ENCODE measurements at regions of chr17 and their contacts with region 1.

Region 1: DNA sequence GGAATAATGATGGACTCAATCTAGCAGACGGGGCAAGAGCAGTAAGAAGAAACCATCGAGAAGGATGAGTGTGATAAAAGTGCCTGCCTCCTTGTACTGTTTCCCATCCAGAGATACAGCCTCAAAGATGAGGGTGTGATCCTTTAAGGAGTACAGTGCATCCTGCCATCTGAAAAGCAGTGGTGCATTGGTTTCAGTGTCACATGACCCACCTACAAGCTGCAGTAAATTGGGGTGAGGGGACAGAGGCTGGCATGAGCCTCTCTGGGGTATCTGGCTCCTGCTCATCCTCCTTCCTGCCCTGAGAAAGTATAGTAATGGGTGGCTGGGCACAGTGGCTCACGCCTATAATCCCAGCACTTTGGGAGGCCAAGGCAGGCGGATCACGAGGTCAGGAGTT is 1.8 kb upstream of the SKAP1 start:
- DNase-seq: no peak
- H3K4me3 ChIP-seq: no peak overlapping the region
- H3K27ac ChIP-seq: no peak overlapping the region
- H3K4me1 ChIP-seq: peaks cover 6% of the 10 kb centered on the region
- H3K27me3 ChIP-seq: peaks cover 3% of the 10 kb centered on the region
- CTCF ChIP-seq: no peak

Region 2: DNA sequence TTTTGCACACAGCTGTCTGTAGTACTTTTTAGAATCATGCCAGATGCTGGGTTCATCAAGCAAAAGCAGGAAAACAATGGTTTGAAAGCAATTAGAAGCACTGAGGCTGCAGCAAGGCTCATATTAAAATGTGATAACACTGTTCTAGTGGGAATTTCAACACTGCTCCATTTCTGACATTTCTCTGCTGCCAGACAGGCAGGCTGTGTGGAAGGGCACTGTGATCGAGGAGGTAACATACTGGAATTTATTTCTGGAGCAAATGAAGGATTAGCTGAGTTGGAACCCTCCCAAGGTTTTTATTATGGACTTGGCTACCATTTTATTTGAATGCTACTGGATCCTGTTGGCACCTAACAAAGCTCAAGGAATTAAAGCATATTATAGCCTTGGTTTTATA is 68.7 kb before region 1 on chr17:
- CTCF ChIA-PET with region 1: interaction called, 10 read pairs
- dilution Hi-C with region 1: no loop called
- in situ Hi-C with region 1: no loop called
- intact Hi-C with region 1: no loop called
- DNase-seq: no peak
- H3K4me3 ChIP-seq: no peak overlapping the region
- H3K27ac ChIP-seq: no peak overlapping the region
- H3K4me1 ChIP-seq: no peaks in the 10 kb centered on the region
- H3K27me3 ChIP-seq: peaks cover 4% of the 10 kb centered on the region
- CTCF ChIP-seq: no peak

Measured in mammary epithelial cell (primary cell).